ENCODE measurements at regions of chr4 and their contacts with region 1.

Region 1: DNA sequence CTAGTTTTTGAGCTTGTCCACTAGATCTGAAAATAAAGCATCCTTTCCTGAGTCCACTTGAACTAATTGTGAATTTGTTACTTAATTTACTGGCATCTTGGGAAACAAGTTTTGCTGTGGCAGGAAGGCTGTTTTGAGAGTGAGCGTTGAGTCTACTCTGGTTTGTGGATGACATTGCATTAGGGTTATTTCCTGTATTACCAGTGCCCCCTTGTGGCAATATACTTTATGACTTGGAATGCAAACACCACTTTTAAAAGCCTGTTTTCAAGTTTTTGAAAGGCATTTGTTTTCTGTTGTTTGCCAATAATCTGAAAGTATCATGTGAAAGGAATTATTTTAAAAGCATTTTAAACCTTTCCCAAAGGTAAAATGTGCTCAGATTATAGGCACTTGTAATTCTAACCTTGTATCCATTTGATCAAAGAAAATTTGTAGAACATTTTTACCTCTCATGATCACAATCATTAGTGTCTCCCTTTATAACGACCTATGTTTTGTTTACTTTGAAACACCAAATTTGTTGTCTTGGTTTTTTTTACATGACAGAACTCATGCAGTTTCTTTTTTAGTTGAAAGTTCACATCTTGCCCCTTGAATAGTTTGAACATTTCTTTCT is 18.0 kb upstream of the CYP2U1 start:
- DNase-seq: peak in 1 of 2 donors; percentile 52
- H3K4me3 ChIP-seq: no peak overlapping the region
- CTCF ChIP-seq: peak in 1 of 3 donors; percentile 51
- POLR2A ChIP-seq: no peak

Region 2: DNA sequence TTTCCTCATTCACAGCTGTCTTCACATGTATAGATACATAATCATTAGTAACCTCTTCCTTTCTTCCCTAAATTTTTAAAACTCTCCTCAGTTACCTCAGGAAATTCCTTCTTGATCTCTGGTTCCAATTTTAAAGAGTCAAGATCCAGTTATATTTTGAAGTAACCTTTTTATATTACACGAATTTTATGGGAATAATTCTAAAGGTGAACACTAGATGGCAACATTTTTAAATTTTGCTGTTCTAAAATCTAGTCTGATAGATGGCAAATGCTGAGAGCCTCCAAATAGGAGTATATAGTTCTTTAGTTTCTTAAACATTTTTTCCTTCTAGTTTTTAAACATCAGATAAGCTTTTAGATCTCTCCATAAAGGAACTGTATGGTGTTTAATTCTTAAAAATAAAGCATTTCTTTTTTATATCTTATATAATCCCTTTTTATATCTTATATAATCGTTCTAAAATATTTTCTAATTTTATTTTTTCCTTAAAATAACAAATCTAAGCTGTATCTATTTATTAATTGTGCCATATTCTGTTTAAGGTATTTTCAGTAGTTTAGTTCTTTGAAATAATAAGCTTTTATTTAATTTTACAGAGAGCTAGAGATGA is 155.4 kb before region 1 on chr4:
- intact Hi-C with region 1: loop called (anchors 1 kb)
- DNase-seq: no peak
- H3K4me3 ChIP-seq: no peak overlapping the region
- CTCF ChIP-seq: no peak
- POLR2A ChIP-seq: no peak

Region 3: GRCh38 chr4:108965016-108965415 is 1051.6 kb after region 1 on chr4:
- intact Hi-C with region 1: no loop called
- DNase-seq: no peak
- H3K4me3 ChIP-seq: no peak overlapping the region
- CTCF ChIP-seq: no peak
- POLR2A ChIP-seq: no peak

Measured in lower leg skin (tissue), 4 donors.